Psoas muscle (tissue), 8 donors: ENCODE measurements at regions of chr15 and their contacts with region 1.

Region 1: DNA sequence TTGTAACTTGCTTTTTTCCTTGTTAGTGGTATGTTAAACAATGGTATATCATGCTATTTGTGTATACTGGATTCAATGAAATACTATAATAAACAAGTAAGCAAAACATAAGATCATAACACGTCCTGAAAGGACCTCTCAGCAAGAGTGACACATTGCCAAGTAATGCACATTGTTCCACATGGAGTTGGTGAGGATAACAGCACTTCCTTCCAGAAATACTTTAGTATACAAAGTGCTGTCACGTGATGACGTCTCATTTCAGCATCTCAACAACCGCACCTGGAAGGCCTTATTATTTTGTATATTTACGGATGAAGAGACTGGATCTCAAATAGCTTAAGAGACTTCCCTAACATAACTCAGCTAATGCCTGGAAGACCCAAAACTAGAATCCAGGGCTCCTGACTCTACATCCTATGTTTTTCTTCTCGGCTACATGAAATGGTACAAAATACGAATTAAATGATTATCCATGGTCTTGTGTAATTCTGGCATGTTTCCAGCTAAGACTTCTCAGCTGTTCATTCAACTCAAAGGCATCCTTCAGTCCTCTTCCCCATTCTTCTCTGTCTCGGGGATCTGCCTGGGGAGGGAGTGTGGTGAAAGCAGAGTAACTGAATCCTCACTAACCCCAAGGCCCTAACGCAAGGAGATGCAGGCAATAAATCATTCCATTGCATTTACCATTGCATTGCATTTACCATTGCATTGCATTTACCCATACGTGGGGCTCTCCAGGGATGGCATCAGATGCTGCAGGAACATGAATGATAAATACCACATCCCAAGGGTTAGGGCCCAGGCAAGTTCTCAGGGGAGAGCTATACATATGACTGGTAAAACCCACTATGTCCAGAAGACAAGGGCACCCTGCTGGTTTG is 79.2 kb downstream of the LIPC start:
- DNase-seq: no peak
- ATAC-seq: no peak
- H3K4me3 ChIP-seq: no peak overlapping the region
- H3K27ac ChIP-seq: no peak overlapping the region
- H3K4me1 ChIP-seq: peaks cover 10% of the 10 kb centered on the region
- H3K27me3 ChIP-seq: no peaks in the 10 kb centered on the region
- CTCF ChIP-seq: no peak

Region 2: GRCh38 chr15:58260911-58261267 is 250.1 kb before region 1 on chr15:
- intact Hi-C with region 1: loop called in 1 of 2 experiments (anchors 5 kb)
- DNase-seq: peak; percentile 61 to 89
- ATAC-seq: peak; percentile 88 to 92 (median 88)
- H3K4me3 ChIP-seq: no peak overlapping the region
- H3K27ac ChIP-seq: peak overlapping the region; percentile 92
- H3K4me1 ChIP-seq: peaks cover 25% of the 10 kb centered on the region
- H3K27me3 ChIP-seq: no peaks in the 10 kb centered on the region
- CTCF ChIP-seq: no peak